Naive thymus-derived CD4-positive, alpha-beta T cell (primary cell): ENCODE measurements at regions of chr17 and their contacts with region 1.

Region 1: GRCh38 chr17:76191896-76192295 is 48.4 kb downstream of the RNF157 start:
- DNase-seq: peak in 7 of 9 donors; percentile 72 to 94 (median 89)
- ATAC-seq: peak; percentile 96
- H3K4me3 ChIP-seq: peak overlapping the region; percentile 42
- H3K4me3 Mint-ChIP-seq: peak overlapping the region; percentile 55 to 87 (median 73)
- H3K27ac ChIP-seq: peak overlapping the region; percentile 79
- H3K27ac Mint-ChIP-seq: peak overlapping the region; percentile 90 to 99 (median 96)
- H3K4me1 ChIP-seq: peaks cover 61 to 84% of the 10 kb centered on the region in 2 donors
- H3K4me1 Mint-ChIP-seq: peaks cover 46 to 87% (median 79%) of the 10 kb centered on the region in 7 donors
- H3K27me3 ChIP-seq: no peaks in the 10 kb centered on the region
- H3K27me3 Mint-ChIP-seq: no peaks in the 10 kb centered on the region

Region 2: GRCh38 chr17:76159170-76159569 is 32.7 kb before region 1 on chr17:
- CTCF ChIA-PET with region 1: no interaction called
- POLR2A ChIA-PET with region 1: no interaction called
- intact Hi-C with region 1: no loop called
- DNase-seq: no peak
- ATAC-seq: no peak
- H3K4me3 ChIP-seq: no peak overlapping the region
- H3K4me3 Mint-ChIP-seq: no peak overlapping the region
- H3K27ac ChIP-seq: no peak overlapping the region
- H3K27ac Mint-ChIP-seq: peak overlapping the region in 2 of 9 donors; percentile 72 to 88
- H3K4me1 ChIP-seq: peaks cover 0 to 7% of the 10 kb centered on the region in 2 donors
- H3K4me1 Mint-ChIP-seq: peaks cover 0 to 28% (median 24%) of the 10 kb centered on the region in 7 donors
- H3K27me3 ChIP-seq: no peaks in the 10 kb centered on the region
- H3K27me3 Mint-ChIP-seq: no peaks in the 10 kb centered on the region

Region 3: DNA sequence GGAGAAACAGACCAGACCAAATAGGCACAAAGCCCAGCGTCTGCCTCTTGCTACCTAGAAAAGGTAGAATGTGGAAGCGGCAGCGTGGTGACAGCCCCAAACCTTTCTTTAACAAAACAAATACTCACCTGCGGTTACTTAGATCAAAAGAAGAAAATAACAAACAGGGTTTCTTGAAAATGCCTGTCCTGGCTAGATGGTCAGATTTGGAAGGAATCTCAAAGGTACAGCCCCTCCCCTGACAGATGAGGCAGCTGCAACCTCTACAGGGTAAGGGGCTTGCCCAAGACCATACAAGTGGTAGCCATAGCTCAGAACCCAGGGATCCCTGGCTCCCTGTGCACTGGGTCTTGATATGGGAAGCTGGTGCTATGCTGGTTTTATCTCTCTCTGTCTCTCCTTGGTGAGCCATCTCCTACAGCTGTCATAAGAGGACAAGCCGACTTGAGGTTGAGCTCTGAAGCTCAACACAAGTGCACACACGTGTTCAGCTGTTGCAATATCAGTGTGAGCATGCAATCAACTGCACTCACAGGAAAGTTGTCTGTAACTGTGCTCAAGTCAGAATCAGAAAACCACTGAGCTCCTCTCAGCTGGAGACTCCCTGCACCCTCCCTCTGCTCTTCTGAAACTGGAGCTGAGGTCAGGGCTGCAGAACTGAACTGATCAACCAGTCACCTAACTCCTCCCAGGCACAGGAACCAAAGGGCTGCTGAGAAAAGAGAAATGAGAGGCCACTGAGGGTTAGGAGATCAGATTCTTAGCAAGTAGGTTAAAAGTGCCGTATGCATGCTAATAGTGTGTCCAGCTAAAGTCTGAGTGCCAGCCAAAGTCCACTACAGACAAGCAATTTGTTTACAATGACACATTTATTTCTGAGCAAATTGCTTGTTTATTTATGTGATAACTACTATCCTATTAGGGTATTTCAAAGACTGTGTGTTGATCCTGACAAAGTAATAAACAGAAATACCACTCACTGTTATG is 54.5 kb after region 1 on chr17:
- CTCF ChIA-PET with region 1: interaction called, 5 read pairs
- POLR2A ChIA-PET with region 1: interaction called, 17 read pairs
- intact Hi-C with region 1: loop called in 1 of 2 experiments (anchors 1 kb)
- DNase-seq: peak in 7 of 9 donors; percentile 43 to 75 (median 52)
- ATAC-seq: peak; percentile 92
- H3K4me3 ChIP-seq: peak overlapping the region; percentile 8
- H3K4me3 Mint-ChIP-seq: peak overlapping the region; percentile 60 to 84 (median 75)
- H3K27ac ChIP-seq: peak overlapping the region; percentile 61
- H3K27ac Mint-ChIP-seq: peak overlapping the region; percentile 84 to 96 (median 92)
- H3K4me1 ChIP-seq: peaks cover 17 to 56% of the 10 kb centered on the region in 2 donors
- H3K4me1 Mint-ChIP-seq: peaks cover 34 to 84% (median 68%) of the 10 kb centered on the region in 7 donors
- H3K27me3 ChIP-seq: no peaks in the 10 kb centered on the region
- H3K27me3 Mint-ChIP-seq: no peaks in the 10 kb centered on the region

Region 4: GRCh38 chr17:76252040-76252954 is 60.4 kb after region 1 on chr17:
- CTCF ChIA-PET with region 1: interaction called, 3 read pairs
- POLR2A ChIA-PET with region 1: interaction called, 16 read pairs
- intact Hi-C with region 1: no loop called
- DNase-seq: peak in 6 of 9 donors; percentile 37 to 63 (median 56)
- ATAC-seq: peak; percentile 86
- H3K4me3 ChIP-seq: peak overlapping the region; percentile 27
- H3K4me3 Mint-ChIP-seq: peak overlapping the region; percentile 69 to 86 (median 82)
- H3K27ac ChIP-seq: peak overlapping the region; percentile 68
- H3K27ac Mint-ChIP-seq: peak overlapping the region; percentile 88 to 99 (median 95)
- H3K4me1 ChIP-seq: peaks cover 33 to 47% of the 10 kb centered on the region in 2 donors
- H3K4me1 Mint-ChIP-seq: peaks cover 39 to 82% (median 65%) of the 10 kb centered on the region in 7 donors
- H3K27me3 ChIP-seq: no peaks in the 10 kb centered on the region
- H3K27me3 Mint-ChIP-seq: no peaks in the 10 kb centered on the region

Region 5: GRCh38 chr17:76397687-76398487 is 206.0 kb after region 1 on chr17:
- CTCF ChIA-PET with region 1: no interaction called
- POLR2A ChIA-PET with region 1: no interaction called
- intact Hi-C with region 1: no loop called
- DNase-seq: peak; percentile 62 to 87 (median 76)
- ATAC-seq: peak; percentile 88
- H3K4me3 ChIP-seq: no peak overlapping the region
- H3K4me3 Mint-ChIP-seq: no peak overlapping the region
- H3K27ac ChIP-seq: no peak overlapping the region
- H3K27ac Mint-ChIP-seq: peak overlapping the region in 1 of 9 donors; percentile 38
- H3K4me1 ChIP-seq: no peaks in the 10 kb centered on the region
- H3K4me1 Mint-ChIP-seq: peaks cover 0 to 5% (median 0%) of the 10 kb centered on the region in 7 donors
- H3K27me3 ChIP-seq: no peaks in the 10 kb centered on the region
- H3K27me3 Mint-ChIP-seq: no peaks in the 10 kb centered on the region